ENCODE measurements at regions of chr4 and their contacts with region 1.

Region 1: GRCh38 chr4:149897783-149898182 is 82.1 kb upstream of the IQCM start:
- DNase-seq: peak; percentile 53
- H3K4me3 ChIP-seq: no peak overlapping the region
- H3K27ac ChIP-seq: no peak overlapping the region
- H3K4me1 ChIP-seq: peaks cover 17% of the 10 kb centered on the region
- H3K27me3 ChIP-seq: no peaks in the 10 kb centered on the region
- CTCF ChIP-seq: peak; percentile 65

Region 2: DNA sequence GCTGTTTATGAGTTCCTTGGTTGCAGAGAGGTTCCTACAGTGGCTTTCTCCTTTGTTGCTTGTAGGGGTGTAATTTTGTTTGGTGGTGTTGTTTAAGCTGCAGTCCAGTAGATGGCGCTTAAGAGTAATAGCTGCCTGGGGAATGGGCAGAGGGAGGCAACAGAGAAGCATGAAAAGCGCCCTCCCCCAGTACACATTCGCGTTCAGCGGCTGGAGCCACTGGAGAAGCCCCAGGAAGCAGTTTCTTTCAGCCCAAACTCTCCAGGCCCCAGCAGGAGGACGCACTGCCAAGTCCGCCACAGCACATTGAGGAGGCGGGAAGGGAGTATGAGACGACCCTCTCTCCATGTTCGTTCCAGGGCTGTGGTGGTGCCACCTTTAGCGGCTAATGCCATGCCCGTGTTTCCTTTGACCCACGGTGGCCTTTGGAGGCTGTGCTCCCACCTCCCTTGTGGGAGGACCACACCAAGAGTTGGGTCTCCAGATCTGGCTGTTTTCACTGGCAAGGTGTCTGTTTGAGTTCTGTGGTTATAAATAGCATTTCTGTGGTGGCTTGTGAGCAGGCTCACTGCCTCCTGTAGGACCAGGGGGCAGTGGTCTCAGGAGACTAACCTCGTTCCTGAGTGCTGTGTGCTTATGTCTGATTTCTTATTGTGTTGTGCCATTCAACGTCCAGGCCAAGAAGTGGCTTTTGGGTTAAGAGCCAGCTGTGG is 1913.6 kb before region 1 on chr4:
- CTCF ChIA-PET with region 1: interaction called, 3 read pairs
- POLR2A ChIA-PET with region 1: no interaction called
- intact Hi-C with region 1: loop called (anchors 5 kb)
- DNase-seq: peak; percentile 87
- H3K4me3 ChIP-seq: no peak overlapping the region
- H3K27ac ChIP-seq: no peak overlapping the region
- H3K4me1 ChIP-seq: peaks cover 16% of the 10 kb centered on the region
- H3K27me3 ChIP-seq: no peaks in the 10 kb centered on the region
- CTCF ChIP-seq: peak; percentile 91

Region 3: GRCh38 chr4:148441986-148442831 is 1455.6 kb before region 1 on chr4 and contains the start of gene NR3C2:
- CTCF ChIA-PET with region 1: no interaction called
- POLR2A ChIA-PET with region 1: no interaction called
- intact Hi-C with region 1: loop called (anchors 10 kb)
- DNase-seq: peak; percentile 98
- H3K4me3 ChIP-seq: peak within 1 kb of the TSS; percentile 72
- H3K27ac ChIP-seq: peak within 1 kb of the TSS; percentile 43
- H3K4me1 ChIP-seq: peaks cover 13% of the 10 kb centered on the region
- H3K27me3 ChIP-seq: peaks cover 15% of the 10 kb centered on the region
- CTCF ChIP-seq: no peak
- total RNA-seq, gene NR3C2: 1.6 and 2.2 TPM in 2 replicates

Region 4: DNA sequence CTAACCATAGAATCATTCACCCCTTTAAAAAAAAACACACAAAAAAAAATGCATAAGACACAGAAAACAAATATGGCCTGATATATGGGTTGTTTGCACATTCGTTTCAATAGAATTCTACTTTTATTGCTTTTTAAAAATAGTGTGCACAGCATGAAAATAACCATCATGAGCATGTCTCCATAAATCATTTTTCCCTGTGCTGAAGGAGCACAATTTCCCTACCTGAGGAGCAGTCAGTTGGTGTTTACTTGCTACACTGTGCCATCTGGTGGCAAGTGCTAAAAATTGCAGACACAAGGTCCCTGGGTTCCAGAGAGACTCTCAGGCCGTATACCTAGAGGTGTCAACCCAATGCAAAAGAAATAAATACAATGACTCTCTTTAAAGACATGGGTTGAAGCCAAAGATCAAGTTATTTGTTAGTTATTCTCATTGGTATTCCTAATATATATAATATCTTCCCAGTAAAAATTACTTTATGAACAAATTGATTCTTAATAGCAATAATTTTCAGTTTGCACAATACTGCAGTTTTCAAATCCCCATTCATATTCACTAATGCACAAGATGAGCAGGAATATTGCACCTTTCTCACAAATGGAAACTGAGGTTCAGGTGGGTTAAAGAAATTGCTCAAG is 633.6 kb before region 1 on chr4:
- CTCF ChIA-PET with region 1: interaction called, 5 read pairs
- POLR2A ChIA-PET with region 1: no interaction called
- intact Hi-C with region 1: loop called (anchors 2 kb)
- DNase-seq: peak; percentile 84
- H3K4me3 ChIP-seq: no peak overlapping the region
- H3K27ac ChIP-seq: no peak overlapping the region
- H3K4me1 ChIP-seq: peaks cover 64% of the 10 kb centered on the region
- H3K27me3 ChIP-seq: no peaks in the 10 kb centered on the region
- CTCF ChIP-seq: peak; percentile 77

Region 5: GRCh38 chr4:149344436-149344835 is 553.3 kb before region 1 on chr4:
- CTCF ChIA-PET with region 1: interaction called, 3 read pairs
- POLR2A ChIA-PET with region 1: no interaction called
- intact Hi-C with region 1: loop called (anchors 1 kb)
- DNase-seq: peak; percentile 72
- H3K4me3 ChIP-seq: no peak overlapping the region
- H3K27ac ChIP-seq: peak overlapping the region; percentile 97
- H3K4me1 ChIP-seq: peaks cover 51% of the 10 kb centered on the region
- H3K27me3 ChIP-seq: no peaks in the 10 kb centered on the region
- CTCF ChIP-seq: no peak

Region 6: GRCh38 chr4:149370785-149371420 is 526.9 kb before region 1 on chr4:
- CTCF ChIA-PET with region 1: no interaction called
- POLR2A ChIA-PET with region 1: no interaction called
- intact Hi-C with region 1: loop called (anchors 1 kb)
- DNase-seq: peak; percentile 87
- H3K4me3 ChIP-seq: no peak overlapping the region
- H3K27ac ChIP-seq: no peak overlapping the region
- H3K4me1 ChIP-seq: peaks cover 6% of the 10 kb centered on the region
- H3K27me3 ChIP-seq: no peaks in the 10 kb centered on the region
- CTCF ChIP-seq: peak; percentile 65

Region 7: DNA sequence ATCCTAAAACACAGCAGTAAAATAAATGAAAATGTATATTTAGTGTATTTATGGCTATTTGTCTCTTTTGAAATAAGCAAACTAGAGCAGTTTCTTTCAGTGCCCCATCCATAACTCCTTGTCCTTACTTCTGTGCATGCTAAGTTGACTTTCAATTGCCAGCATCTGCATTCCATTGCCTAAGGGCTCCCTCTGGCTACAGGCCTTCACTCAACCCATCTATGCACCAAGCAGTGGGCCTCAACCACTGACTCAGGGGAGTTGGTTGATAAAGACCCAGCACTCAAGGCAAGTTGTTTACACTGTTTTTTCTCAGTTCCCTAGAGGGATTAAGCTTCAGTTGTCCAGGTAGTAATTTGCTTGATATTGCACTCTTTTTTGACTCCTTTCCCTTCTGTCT is 347.9 kb before region 1 on chr4:
- CTCF ChIA-PET with region 1: no interaction called
- POLR2A ChIA-PET with region 1: no interaction called
- intact Hi-C with region 1: loop called (anchors 5 kb)
- DNase-seq: peak; percentile 67
- H3K4me3 ChIP-seq: no peak overlapping the region
- H3K27ac ChIP-seq: no peak overlapping the region
- H3K4me1 ChIP-seq: peaks cover 36% of the 10 kb centered on the region
- H3K27me3 ChIP-seq: no peaks in the 10 kb centered on the region
- CTCF ChIP-seq: peak; percentile 63

Measured in A673 (cell line).